Dendritic cell treated with granulocyte-macrophage colony-stimulating factor and Interleukin-4, amounts not matched to agents 40 ng/mL and 50 ng/mL, for 4 days (primary cell): ENCODE measurements at regions of chr19 and their contacts with region 1.

Region 1: GRCh38 chr19:43519436-43520088 is 7.4 kb downstream of the ETHE1 start:
- H3K4me3 Mint-ChIP-seq: no peak overlapping the region
- H3K27ac Mint-ChIP-seq: no peak overlapping the region
- H3K4me1 Mint-ChIP-seq: peaks cover 47% of the 10 kb centered on the region
- H3K27me3 Mint-ChIP-seq: no peaks in the 10 kb centered on the region

Region 2: GRCh38 chr19:43395561-43395960 is 124.0 kb before region 1 on chr19:
- intact Hi-C with region 1: no loop called
- H3K4me3 Mint-ChIP-seq: no peak overlapping the region
- H3K27ac Mint-ChIP-seq: no peak overlapping the region
- H3K4me1 Mint-ChIP-seq: no peaks in the 10 kb centered on the region
- H3K27me3 Mint-ChIP-seq: no peaks in the 10 kb centered on the region

Region 3: GRCh38 chr19:43433358-43433673 is 86.2 kb before region 1 on chr19:
- intact Hi-C with region 1: loop called (anchors 1 kb)
- H3K4me3 Mint-ChIP-seq: no peak overlapping the region
- H3K27ac Mint-ChIP-seq: no peak overlapping the region
- H3K4me1 Mint-ChIP-seq: peaks cover 15% of the 10 kb centered on the region
- H3K27me3 Mint-ChIP-seq: peaks cover 6% of the 10 kb centered on the region

Region 4: GRCh38 chr19:43446746-43447489 is 72.6 kb before region 1 on chr19:
- intact Hi-C with region 1: loop called (anchors 1 kb)
- H3K4me3 Mint-ChIP-seq: no peak overlapping the region
- H3K27ac Mint-ChIP-seq: no peak overlapping the region
- H3K4me1 Mint-ChIP-seq: peaks cover 79% of the 10 kb centered on the region
- H3K27me3 Mint-ChIP-seq: peaks cover 10% of the 10 kb centered on the region

Region 5: GRCh38 chr19:43474986-43475705 is 44.4 kb before region 1 on chr19:
- intact Hi-C with region 1: no loop called
- H3K4me3 Mint-ChIP-seq: peak overlapping the region; percentile 81
- H3K27ac Mint-ChIP-seq: peak overlapping the region; percentile 92
- H3K4me1 Mint-ChIP-seq: peaks cover 24% of the 10 kb centered on the region
- H3K27me3 Mint-ChIP-seq: peaks cover 10% of the 10 kb centered on the region

Region 6: GRCh38 chr19:43503501-43504425 is 15.8 kb before region 1 on chr19:
- intact Hi-C with region 1: loop called (anchors 2 kb)
- H3K4me3 Mint-ChIP-seq: peak overlapping the region; percentile 100
- H3K27ac Mint-ChIP-seq: peak overlapping the region; percentile 93
- H3K4me1 Mint-ChIP-seq: peaks cover 44% of the 10 kb centered on the region
- H3K27me3 Mint-ChIP-seq: peaks cover 4% of the 10 kb centered on the region